ENCODE measurements at regions of chr11 and their contacts with region 1.

Region 1: DNA sequence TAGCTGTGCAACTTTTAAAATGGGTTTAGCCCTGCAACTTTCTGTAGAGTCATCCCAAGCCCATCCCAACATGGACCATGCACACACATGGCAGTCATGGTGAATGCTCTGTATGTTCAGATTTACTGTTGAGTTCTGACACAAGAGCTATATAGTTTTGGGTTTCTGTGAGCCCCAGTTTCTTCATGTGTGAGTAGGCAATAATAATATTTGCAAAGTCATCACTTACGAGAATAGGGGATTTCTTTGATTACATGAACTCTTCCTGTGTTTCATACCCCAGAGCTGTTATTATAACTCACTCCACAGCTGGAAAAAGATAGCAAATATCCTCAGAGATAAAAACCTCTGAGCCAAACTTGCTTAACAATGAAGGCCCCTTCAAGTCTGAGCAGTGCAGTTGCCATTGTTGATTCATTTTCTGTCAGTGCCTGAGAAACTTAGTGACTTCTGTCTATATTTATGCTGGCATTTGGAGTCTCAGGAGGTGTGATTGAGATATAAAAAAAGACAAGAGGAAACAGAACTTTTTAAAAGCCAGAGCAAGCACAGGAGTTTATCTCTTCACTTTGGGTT is 767.9 kb upstream of the API5 start:
- DNase-seq: no peak
- H3K4me3 ChIP-seq: no peak overlapping the region
- H3K27ac ChIP-seq: no peak overlapping the region
- H3K4me1 ChIP-seq: peaks cover 6% of the 10 kb centered on the region
- H3K27me3 ChIP-seq: no peaks in the 10 kb centered on the region
- CTCF ChIP-seq: no peak

Region 2: GRCh38 chr11:43177975-43178374 is 634.0 kb after region 1 on chr11:
- CTCF ChIA-PET with region 1: no interaction called
- dilution Hi-C with region 1: no loop called
- in situ Hi-C with region 1: no loop called
- intact Hi-C with region 1: loop called (anchors 5 kb)
- DNase-seq: no peak
- H3K4me3 ChIP-seq: no peak overlapping the region
- H3K27ac ChIP-seq: no peak overlapping the region
- H3K4me1 ChIP-seq: no peaks in the 10 kb centered on the region
- H3K27me3 ChIP-seq: no peaks in the 10 kb centered on the region
- CTCF ChIP-seq: no peak

Measured in mammary epithelial cell (primary cell).